ENCODE measurements at regions of chr6 and their contacts with region 1.

Region 1: DNA sequence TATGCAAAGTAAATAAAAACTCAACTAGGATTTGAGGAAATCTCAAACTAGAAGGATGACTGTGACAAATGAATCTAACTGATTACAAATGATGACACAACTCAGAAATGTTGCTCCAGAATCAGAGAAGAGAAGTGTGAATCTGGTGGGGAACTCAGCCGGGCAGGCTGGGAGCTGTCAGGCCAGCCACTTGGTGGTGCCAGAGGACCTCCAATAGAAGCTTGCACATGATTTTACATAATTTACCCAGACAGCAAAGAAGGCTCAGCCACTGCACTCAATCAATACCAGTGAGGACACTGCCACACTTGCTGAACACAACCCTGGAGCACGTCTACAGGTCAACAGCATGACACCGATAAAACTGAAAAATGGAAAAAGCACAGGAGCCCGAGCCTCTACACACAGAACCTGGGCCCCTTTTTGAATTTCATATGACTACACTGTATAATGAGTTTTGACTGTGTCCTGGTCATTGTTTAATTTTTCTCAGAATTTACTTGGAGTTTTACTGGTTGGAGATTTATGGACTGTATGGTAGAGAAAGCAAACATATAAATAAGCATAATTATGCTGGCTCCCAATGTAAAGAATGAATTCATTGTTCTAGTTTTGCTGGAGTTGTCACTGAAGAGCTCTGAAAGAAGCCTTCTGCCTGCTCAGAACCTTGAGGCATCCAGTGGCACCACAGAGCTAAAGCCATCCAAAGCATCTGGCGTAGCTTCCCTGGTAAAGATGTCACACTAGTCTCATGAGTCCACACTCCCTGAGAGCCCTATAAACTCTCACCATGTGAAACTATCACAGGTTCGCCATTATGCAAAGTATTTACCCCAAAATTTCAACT is 296.5 kb downstream of the THBS2 start:
- DNase-seq: peak; percentile 64
- H3K4me3 ChIP-seq: no peak overlapping the region
- H3K27ac ChIP-seq: no peak overlapping the region
- H3K4me1 ChIP-seq: no peaks in the 10 kb centered on the region
- H3K27me3 ChIP-seq: no peaks in the 10 kb centered on the region
- CTCF ChIP-seq: peak; percentile 85 to 89

Region 2: DNA sequence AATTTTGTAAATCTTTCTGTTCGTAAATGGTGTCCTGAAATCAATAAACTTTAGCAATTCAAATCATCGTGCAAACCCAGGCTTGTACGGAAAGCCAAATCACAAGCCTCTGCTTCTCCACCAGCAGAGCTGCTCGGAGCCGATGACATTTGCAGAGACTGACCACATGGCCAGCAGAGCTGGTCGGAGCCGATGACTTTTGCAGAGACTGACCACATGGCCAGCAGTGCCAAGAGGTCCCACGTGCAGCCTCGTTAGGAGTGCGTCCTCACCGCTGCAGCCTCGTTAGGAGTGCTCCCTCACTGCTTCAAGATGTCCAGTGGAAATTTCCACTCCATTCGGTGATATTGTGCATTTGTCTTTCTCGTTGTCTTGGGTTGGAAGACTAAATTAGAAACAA is 487.6 kb before region 1 on chr6:
- CTCF ChIA-PET with region 1: no interaction called
- dilution Hi-C with region 1: no loop called
- in situ Hi-C with region 1: no loop called
- intact Hi-C with region 1: no loop called
- DNase-seq: no peak
- H3K4me3 ChIP-seq: no peak overlapping the region
- H3K27ac ChIP-seq: no peak overlapping the region
- H3K4me1 ChIP-seq: no peaks in the 10 kb centered on the region
- H3K27me3 ChIP-seq: no peaks in the 10 kb centered on the region
- CTCF ChIP-seq: no peak

Region 3: GRCh38 chr6:168895102-168895812 is 61.9 kb before region 1 on chr6:
- CTCF ChIA-PET with region 1: no interaction called
- dilution Hi-C with region 1: no loop called
- in situ Hi-C with region 1: no loop called
- intact Hi-C with region 1: loop called (anchors 1 kb)
- DNase-seq: peak; percentile 64
- H3K4me3 ChIP-seq: no peak overlapping the region
- H3K27ac ChIP-seq: no peak overlapping the region
- H3K4me1 ChIP-seq: peaks cover 4% of the 10 kb centered on the region
- H3K27me3 ChIP-seq: no peaks in the 10 kb centered on the region
- CTCF ChIP-seq: peak; percentile 95 to 96

Region 4: GRCh38 chr6:168943231-168943905 is 13.7 kb before region 1 on chr6:
- CTCF ChIA-PET with region 1: no interaction called
- dilution Hi-C with region 1: no loop called
- in situ Hi-C with region 1: no loop called
- intact Hi-C with region 1: no loop called
- DNase-seq: no peak
- H3K4me3 ChIP-seq: no peak overlapping the region
- H3K27ac ChIP-seq: no peak overlapping the region
- H3K4me1 ChIP-seq: no peaks in the 10 kb centered on the region
- H3K27me3 ChIP-seq: peaks cover 7% of the 10 kb centered on the region
- CTCF ChIP-seq: no peak

Region 5: GRCh38 chr6:169008644-169009257 is 51.6 kb after region 1 on chr6:
- CTCF ChIA-PET with region 1: no interaction called
- dilution Hi-C with region 1: no loop called
- in situ Hi-C with region 1: no loop called
- intact Hi-C with region 1: no loop called
- DNase-seq: no peak
- H3K4me3 ChIP-seq: no peak overlapping the region
- H3K27ac ChIP-seq: no peak overlapping the region
- H3K4me1 ChIP-seq: no peaks in the 10 kb centered on the region
- H3K27me3 ChIP-seq: no peaks in the 10 kb centered on the region
- CTCF ChIP-seq: no peak

Region 6: GRCh38 chr6:169224185-169224695 is 267.1 kb after region 1 on chr6:
- CTCF ChIA-PET with region 1: interaction called, 10 read pairs
- dilution Hi-C with region 1: no loop called
- in situ Hi-C with region 1: no loop called
- intact Hi-C with region 1: no loop called
- DNase-seq: peak; percentile 89
- H3K4me3 ChIP-seq: no peak overlapping the region
- H3K27ac ChIP-seq: no peak overlapping the region
- H3K4me1 ChIP-seq: peaks cover 15% of the 10 kb centered on the region
- H3K27me3 ChIP-seq: no peaks in the 10 kb centered on the region
- CTCF ChIP-seq: no peak

Region 7: GRCh38 chr6:169487579-169488436 is 530.7 kb after region 1 on chr6:
- CTCF ChIA-PET with region 1: no interaction called
- dilution Hi-C with region 1: no loop called
- in situ Hi-C with region 1: no loop called
- intact Hi-C with region 1: loop called (anchors 2 kb)
- DNase-seq: no peak
- H3K4me3 ChIP-seq: no peak overlapping the region
- H3K27ac ChIP-seq: no peak overlapping the region
- H3K4me1 ChIP-seq: no peaks in the 10 kb centered on the region
- H3K27me3 ChIP-seq: no peaks in the 10 kb centered on the region
- CTCF ChIP-seq: peak; percentile 12 to 22

Region 8: GRCh38 chr6:169654598-169655391 is 697.7 kb after region 1 on chr6:
- CTCF ChIA-PET with region 1: no interaction called
- dilution Hi-C with region 1: no loop called
- in situ Hi-C with region 1: no loop called
- intact Hi-C with region 1: loop called (anchors 2 kb)
- DNase-seq: peak; percentile 67
- H3K4me3 ChIP-seq: peak overlapping the region; percentile 26 to 59 (median 52)
- H3K27ac ChIP-seq: peak overlapping the region; percentile 41
- H3K4me1 ChIP-seq: peaks cover 6% of the 10 kb centered on the region
- H3K27me3 ChIP-seq: no peaks in the 10 kb centered on the region
- CTCF ChIP-seq: peak in 1 of 2 donors; percentile 46

Region 9: DNA sequence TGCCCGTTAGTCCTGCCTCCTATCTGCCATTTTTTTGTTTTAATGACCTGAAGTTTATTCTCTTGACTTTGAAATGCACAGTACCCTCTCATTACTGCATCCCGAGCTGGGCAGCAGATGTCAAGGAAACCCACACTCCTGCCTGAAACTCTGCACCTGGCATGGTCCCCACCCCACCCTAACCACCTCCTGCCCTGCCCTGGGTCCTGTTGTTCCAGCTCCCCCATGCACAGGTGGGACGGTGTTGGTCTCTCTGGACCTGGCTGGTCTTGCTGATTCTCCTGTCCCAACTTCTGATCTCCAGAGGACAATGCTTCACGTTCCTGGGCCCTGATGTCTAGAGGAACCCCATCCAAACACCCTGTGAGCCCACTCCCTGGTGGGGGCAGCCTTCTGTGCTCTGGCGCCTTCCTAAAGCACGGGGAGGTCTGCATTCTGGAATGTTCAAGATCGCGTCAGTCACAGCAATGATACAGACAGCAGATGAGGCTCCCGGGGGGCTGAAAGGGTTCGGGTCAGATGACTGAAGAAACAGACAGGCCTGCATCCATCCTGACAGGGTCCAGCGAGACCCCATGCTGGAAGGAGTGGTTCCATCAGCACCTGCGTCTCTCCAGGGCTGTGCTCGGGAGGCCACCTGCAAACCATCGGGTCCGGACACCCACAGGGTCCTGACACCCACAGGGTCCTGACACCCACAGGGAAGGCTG is 867.9 kb after region 1 on chr6:
- CTCF ChIA-PET with region 1: no interaction called
- dilution Hi-C with region 1: no loop called
- in situ Hi-C with region 1: no loop called
- intact Hi-C with region 1: loop called (anchors 5 kb)
- DNase-seq: no peak
- H3K4me3 ChIP-seq: no peak overlapping the region
- H3K27ac ChIP-seq: no peak overlapping the region
- H3K4me1 ChIP-seq: no peaks in the 10 kb centered on the region
- H3K27me3 ChIP-seq: peaks cover 2% of the 10 kb centered on the region
- CTCF ChIP-seq: no peak

Region 10: DNA sequence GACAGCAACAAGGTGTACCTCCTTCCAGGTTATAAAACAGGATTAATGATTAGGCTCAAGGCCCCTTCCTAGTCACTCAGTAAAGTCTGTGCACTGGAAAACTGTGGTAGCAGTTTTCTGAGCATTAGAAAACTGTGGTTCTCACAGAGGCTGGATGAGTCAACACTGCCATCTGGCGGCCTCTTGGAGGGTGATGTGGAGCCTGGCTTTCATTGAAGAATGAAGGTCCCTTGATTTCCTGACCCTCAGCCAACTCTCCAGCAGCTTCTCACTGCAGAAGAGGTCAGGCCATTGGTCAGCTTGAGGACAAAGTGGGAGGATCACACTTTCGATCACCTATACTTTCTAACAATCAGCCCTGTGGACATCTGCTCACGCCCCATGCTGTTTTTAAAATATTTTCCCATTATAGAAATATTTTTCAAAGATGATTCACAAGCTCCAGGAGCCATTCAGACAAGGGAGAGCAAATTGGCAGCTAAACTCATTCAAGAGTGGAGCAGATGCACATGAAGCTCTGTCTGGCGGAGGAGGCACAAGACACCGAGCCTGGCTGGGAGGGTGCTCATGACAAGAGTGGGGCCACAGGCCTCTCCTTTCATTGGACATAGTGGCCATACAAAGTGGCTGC is 1572.8 kb after region 1 on chr6:
- CTCF ChIA-PET with region 1: no interaction called
- dilution Hi-C with region 1: no loop called
- in situ Hi-C with region 1: no loop called
- intact Hi-C with region 1: loop called (anchors 1 kb)
- DNase-seq: peak; percentile 48
- H3K4me3 ChIP-seq: no peak overlapping the region
- H3K27ac ChIP-seq: no peak overlapping the region
- H3K4me1 ChIP-seq: no peaks in the 10 kb centered on the region
- H3K27me3 ChIP-seq: no peaks in the 10 kb centered on the region
- CTCF ChIP-seq: peak; percentile 90 to 96

Measured in mammary epithelial cell (primary cell).